ENCODE measurements at regions of chr20 and their contacts with region 1.

Region 1: GRCh38 chr20:47493175-47493962 is 8.3 kb upstream of the NCOA3 start:
- DNase-seq: peak; percentile 93 to 96 (median 95)
- H3K4me3 ChIP-seq: peak overlapping the region; percentile 9
- H3K27ac ChIP-seq: peak overlapping the region in 1 of 2 donors; percentile 36
- H3K4me1 ChIP-seq: peaks cover 5% of the 10 kb centered on the region
- H3K27me3 ChIP-seq: no peaks in the 10 kb centered on the region
- CTCF ChIP-seq: no peak
- EP300 ChIP-seq: no peak
- POLR2A ChIP-seq: no peak

Region 2: GRCh38 chr20:47428164-47428563 is 65.2 kb before region 1 on chr20:
- intact Hi-C with region 1: loop called in 1 of 4 experiments (anchors 10 kb)
- DNase-seq: no peak
- H3K4me3 ChIP-seq: no peak overlapping the region
- H3K27ac ChIP-seq: no peak overlapping the region
- H3K4me1 ChIP-seq: no peaks in the 10 kb centered on the region
- H3K27me3 ChIP-seq: no peaks in the 10 kb centered on the region
- CTCF ChIP-seq: no peak
- EP300 ChIP-seq: no peak
- POLR2A ChIP-seq: no peak

Measured in ovary (tissue), 10 donors.